ENCODE measurements at regions of chr1 and their contacts with region 1.

Region 1: DNA sequence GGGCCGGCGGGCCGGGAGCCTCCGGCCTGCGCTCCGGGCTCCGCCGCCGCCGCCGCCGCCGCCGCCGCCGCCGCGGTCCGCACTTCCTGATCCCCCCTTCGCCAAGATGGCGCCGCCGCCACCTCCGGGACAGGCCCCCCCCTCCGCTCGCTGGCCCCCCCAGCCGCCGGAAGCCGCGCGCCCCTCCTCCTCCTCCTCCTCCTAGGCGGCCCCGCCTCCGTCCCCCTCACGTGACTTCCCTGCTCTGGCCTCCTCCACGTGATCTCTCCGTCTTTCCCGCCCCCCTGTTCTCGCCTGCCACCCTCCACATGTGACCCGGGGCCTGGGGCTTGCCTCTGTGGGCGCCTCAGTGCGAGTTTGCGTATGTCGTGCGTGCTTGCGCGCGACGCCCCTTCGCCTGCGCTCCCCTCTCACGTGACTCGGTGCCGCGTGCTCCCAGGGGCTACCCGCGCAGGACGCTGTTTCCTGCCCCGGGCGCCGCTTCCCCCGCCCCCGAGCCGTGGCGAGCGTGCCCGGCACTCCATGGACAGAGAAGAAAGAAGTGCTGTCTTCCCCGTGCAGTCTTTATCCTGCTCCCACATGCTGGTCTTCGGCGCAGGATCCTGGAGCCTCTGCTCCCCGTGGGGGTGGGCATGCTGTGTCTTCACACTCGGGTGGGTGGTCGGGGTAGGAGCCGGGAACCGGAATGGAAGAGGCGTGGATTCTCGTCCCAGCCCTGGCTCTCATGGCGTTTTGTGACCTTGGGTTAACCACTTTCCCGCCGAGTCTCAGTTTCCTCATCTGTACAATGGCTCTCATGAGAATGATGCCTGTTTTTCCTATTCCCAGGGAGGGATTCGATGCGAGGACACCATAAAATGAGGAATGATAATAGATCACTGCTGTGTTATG is at the start of gene UBE2Q1:
- DNase-seq: peak; percentile 100
- H3K4me3 ChIP-seq: peak within 1 kb of the TSS; percentile 84 to 99 (median 92)
- H3K27ac ChIP-seq: peak within 1 kb of the TSS; percentile 92 to 96 (median 96)
- H3K4me1 ChIP-seq: peaks cover 19 to 51% (median 40%) of the 10 kb centered on the region in 4 donors
- H3K27me3 ChIP-seq: no peaks in the 10 kb centered on the region
- CTCF ChIP-seq: no peak
- EP300 ChIP-seq: no peak
- POLR2A ChIP-seq: peak; percentile 52
- total RNA-seq, gene UBE2Q1: 23.7 to 41.3 (median 31.3) TPM

Region 2: DNA sequence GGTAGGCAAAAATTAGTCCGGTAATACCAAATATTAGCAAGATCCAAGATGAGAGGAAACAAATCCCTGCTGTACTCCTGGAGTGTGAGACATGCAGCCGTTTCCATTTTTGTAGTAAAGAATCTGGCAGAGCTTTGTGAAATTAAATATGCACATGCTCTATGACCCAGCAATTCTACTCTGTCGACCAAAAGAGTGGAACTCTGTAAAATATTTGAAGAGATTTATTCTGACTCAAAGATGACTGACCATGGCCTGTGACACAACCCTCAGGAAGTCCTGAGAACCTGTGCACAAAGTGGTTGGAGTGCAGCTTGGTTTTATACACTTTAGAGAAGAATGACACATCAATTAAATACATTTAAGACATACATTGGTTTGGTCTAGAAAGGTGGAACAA is 270.2 kb before region 1 on chr1:
- intact Hi-C with region 1: no loop called
- DNase-seq: no peak
- H3K4me3 ChIP-seq: no peak overlapping the region
- H3K27ac ChIP-seq: no peak overlapping the region
- H3K4me1 ChIP-seq: no peaks in the 10 kb centered on the region
- H3K27me3 ChIP-seq: no peaks in the 10 kb centered on the region
- CTCF ChIP-seq: no peak
- EP300 ChIP-seq: no peak
- POLR2A ChIP-seq: no peak

Region 3: DNA sequence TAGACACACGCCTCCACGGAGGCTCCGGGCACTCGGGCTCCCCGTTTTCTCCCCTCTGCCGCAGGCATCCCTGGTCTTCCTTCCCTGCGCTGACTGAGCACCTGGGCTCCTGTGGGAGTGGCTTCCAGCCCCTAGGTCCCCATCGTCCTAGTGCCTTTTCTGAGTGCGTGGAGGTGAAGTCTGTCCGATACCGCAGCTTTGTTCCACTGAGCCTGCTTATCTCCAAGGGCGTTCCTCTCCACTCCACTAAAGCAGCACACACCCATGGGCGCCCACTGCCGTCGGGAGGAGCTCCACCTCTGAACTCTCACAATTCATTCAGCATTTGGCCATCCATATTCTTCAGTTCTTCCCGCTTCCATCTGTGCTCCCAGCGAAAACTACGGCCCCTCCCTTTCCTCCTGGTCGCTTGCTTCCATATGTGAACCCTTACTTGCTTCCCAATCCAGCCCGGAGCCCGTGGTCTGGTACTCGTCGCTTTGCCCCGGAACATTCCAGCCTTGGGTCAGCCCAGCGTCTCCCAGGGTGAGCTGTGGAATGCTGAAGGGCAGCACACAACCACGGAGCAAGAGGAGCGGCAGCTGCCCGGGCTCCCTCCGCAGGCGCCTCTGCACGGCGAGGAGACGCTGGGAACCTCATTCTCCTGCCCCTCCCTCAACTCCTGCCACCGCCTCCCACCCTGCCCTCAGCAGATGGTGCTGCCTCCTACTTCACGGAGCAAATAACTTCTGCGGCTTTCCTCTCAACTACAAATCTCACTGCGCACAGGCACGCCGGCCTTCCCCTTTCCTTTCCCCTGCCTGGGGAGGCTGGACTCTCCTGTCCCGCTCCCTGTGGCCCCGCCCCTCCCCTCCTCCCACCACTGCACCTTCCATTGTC is 206.0 kb before region 1 on chr1:
- intact Hi-C with region 1: loop called (anchors 10 kb)
- DNase-seq: no peak
- H3K4me3 ChIP-seq: peak overlapping the region; percentile 47 to 56 (median 50)
- H3K27ac ChIP-seq: peak overlapping the region; percentile 73 to 78 (median 75)
- H3K4me1 ChIP-seq: peaks cover 19 to 39% (median 31%) of the 10 kb centered on the region in 4 donors
- H3K27me3 ChIP-seq: no peaks in the 10 kb centered on the region
- CTCF ChIP-seq: peak in 1 of 3 experiments; percentile 2
- EP300 ChIP-seq: no peak
- POLR2A ChIP-seq: no peak

Region 4: DNA sequence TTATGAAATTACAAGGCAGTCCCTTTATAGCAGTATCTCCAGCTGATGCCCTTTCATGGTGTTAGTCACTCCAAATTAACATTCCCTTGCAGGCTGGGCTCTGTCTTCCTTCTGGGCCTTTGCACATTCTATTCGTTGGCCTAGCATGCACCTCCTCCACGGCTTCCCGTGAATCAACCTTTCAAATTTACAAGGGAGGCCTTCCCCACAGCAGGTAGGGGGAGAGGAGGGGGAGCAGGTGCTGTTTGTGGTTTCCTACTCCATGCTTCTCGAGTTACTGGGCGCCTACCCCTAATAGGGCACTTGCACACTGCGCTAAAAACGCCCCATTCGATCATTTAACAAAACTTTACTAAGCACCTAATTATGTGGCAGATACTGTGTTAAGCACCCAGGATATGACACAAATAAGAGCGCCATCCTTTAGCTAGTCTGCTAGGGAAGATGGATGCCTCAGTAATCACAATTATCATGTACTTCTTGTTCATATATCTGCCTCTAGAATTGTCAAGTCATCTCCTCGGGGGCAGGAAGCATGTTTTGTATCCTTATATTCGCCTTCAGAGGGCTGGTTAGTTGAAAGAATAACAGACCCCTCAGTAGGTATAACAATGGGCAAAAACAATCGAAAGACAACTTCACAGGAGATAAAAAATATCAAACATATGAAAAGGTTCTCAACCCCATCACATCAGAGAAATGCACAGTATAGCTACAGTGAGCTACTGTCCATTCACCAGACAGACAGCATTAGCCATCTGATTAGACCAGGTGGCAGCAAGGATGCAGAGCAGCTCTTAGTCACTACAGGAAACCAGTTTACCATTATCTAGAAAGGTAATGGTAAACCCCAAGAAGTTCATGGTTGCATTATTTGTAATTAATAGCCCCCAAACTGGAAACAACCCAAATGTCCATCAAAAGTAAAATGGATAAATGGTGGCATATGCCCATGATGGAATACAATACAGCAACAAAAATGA is 50.9 kb after region 1 on chr1:
- intact Hi-C with region 1: loop called (anchors 5 kb)
- DNase-seq: no peak
- H3K4me3 ChIP-seq: no peak overlapping the region
- H3K27ac ChIP-seq: peak overlapping the region; percentile 94 to 99 (median 96)
- H3K4me1 ChIP-seq: peaks cover 25 to 58% (median 36%) of the 10 kb centered on the region in 4 donors
- H3K27me3 ChIP-seq: no peaks in the 10 kb centered on the region
- CTCF ChIP-seq: no peak
- EP300 ChIP-seq: no peak
- POLR2A ChIP-seq: no peak

Region 5: DNA sequence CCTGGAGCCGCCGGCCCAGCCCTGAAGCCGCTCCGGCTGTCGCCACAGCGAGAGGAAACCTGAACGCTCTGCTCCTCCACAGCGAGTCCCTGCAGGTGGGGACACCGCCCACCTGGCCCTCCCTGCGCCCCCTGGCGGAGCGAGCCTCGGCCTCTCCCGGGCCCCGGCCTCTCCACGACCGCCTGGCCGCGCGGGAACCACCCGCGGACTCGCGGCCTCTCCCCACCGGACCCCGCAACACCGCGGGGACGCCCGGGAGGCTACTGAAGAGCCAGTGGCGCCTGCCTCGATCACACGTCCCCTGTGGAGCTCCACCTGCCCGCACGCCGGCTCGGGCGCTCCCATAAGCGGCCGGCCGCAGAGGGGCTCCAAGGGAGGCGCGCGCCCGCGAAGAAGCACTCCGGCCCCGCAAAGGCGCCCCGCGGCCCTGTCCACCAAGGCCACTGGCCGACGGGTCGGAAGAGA is 201.7 kb after region 1 on chr1:
- intact Hi-C with region 1: loop called (anchors 2 kb)
- DNase-seq: no peak
- H3K4me3 ChIP-seq: peak overlapping the region; percentile 39 to 52 (median 49)
- H3K27ac ChIP-seq: peak overlapping the region in 1 of 4 donors; percentile 2
- H3K4me1 ChIP-seq: peaks cover 3 to 10% (median 9%) of the 10 kb centered on the region in 4 donors
- H3K27me3 ChIP-seq: peaks cover 0 to 9% (median 0%) of the 10 kb centered on the region in 4 donors
- CTCF ChIP-seq: peak; percentile 71 to 88 (median 79)
- EP300 ChIP-seq: no peak
- POLR2A ChIP-seq: no peak

Region 6: DNA sequence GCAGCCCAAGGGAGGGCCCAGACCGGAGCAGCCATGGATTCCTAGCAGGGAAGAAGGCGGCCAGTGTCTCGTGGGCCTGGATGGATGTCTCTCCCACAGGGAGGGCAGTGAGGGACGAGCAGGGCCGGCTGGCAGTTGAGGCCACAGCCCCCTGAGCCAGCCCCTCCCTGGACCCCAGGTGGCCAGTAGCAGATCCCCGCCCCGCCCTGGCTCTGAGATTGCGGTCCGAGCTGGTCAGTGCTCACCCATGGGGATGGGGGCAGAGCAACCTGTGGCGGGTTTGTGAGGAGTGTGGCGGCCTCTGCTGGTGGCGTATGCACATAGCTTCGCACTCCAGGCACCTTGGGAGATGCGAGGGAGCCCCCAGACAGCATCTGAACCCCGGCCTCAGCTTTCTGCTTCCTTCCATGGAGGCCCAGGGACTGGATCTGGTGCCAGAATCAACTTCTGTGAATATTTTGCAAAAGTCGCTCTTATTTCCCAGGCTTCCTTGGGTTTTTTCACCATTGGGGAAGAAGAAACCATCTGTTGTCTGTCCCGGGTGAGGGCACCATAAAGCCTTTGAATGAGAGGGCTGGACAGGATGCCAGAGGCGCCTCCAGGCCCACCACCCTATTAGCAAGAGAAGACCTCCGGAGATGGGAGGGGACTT is 319.7 kb after region 1 on chr1:
- intact Hi-C with region 1: loop called (anchors 2 kb)
- DNase-seq: no peak
- H3K4me3 ChIP-seq: no peak overlapping the region
- H3K27ac ChIP-seq: no peak overlapping the region
- H3K4me1 ChIP-seq: peaks cover 0 to 9% (median 5%) of the 10 kb centered on the region in 4 donors
- H3K27me3 ChIP-seq: peaks cover 0 to 7% (median 0%) of the 10 kb centered on the region in 4 donors
- CTCF ChIP-seq: peak; percentile 86 to 91 (median 91)
- EP300 ChIP-seq: no peak
- POLR2A ChIP-seq: no peak

Measured in esophagus muscularis mucosa (tissue), 4 donors.